ENCODE measurements at regions of chr3 and their contacts with region 1.

Region 1: GRCh38 chr3:51941798-51942602 is at the starts of genes PARP3 and RRP9:
- DNase-seq: peak; percentile 100
- ATAC-seq: peak; percentile 95
- H3K4me3 Mint-ChIP-seq: peak within 1 kb of the TSS; percentile 84
- H3K27ac Mint-ChIP-seq: peak within 1 kb of the TSS; percentile 83
- H3K4me1 Mint-ChIP-seq: peaks cover 33% of the 10 kb centered on the region
- H3K27me3 Mint-ChIP-seq: no peaks in the 10 kb centered on the region
- total RNA-seq, gene PARP3: 10.6 to 12.2 TPM
- total RNA-seq, gene RRP9: 38.2 to 39.3 TPM

Region 2: DNA sequence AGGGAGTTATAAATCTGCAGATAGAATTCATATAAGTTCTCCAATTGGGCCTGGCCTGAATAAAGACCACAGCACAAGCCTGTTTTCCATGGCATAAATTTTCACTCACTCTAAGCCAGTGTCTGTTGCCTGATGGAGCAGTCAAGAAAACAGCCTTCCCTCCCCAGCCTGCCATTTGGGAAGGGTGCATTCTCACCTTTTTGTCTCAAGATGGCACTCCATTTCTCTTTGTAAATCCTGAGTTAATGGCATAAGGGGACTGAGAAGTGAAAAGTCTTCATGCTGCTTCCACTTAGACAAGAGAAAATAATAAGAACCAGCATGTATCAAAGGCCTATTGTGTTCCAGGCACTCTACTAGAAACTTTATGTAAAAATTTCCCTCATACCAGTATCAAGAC is 672.5 kb before region 1 on chr3:
- CTCF ChIA-PET with region 1: no interaction called
- POLR2A ChIA-PET with region 1: no interaction called
- intact Hi-C with region 1: no loop called
- DNase-seq: no peak
- ATAC-seq: no peak
- H3K4me3 Mint-ChIP-seq: no peak overlapping the region
- H3K27ac Mint-ChIP-seq: no peak overlapping the region
- H3K4me1 Mint-ChIP-seq: peaks cover 29% of the 10 kb centered on the region
- H3K27me3 Mint-ChIP-seq: no peaks in the 10 kb centered on the region

Region 3: DNA sequence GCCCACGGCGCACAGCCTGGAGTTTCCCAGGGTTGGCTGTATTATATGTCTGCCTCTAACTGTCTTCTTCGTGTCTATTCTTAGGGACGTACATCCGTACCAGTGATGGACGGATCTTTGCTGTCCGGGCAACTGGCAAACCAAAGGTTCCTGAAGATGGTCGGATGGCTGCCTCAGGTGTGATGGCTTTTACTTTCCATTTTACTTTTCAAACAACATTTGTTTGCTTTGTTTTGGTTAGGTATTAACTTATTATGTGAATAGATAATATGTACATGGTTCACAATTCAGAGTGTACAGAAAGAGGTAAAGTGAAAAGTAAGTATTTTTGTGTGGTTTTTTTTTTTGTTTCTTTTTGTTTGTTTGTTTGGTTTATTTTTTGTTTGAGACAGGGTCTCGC is 282.1 kb before region 1 on chr3:
- CTCF ChIA-PET with region 1: no interaction called
- POLR2A ChIA-PET with region 1: no interaction called
- intact Hi-C with region 1: no loop called
- DNase-seq: no peak
- ATAC-seq: no peak
- H3K4me3 Mint-ChIP-seq: no peak overlapping the region
- H3K27ac Mint-ChIP-seq: no peak overlapping the region
- H3K4me1 Mint-ChIP-seq: no peaks in the 10 kb centered on the region
- H3K27me3 Mint-ChIP-seq: no peaks in the 10 kb centered on the region

Region 4: GRCh38 chr3:51670823-51671733 is 270.9 kb before region 1 on chr3 and contains the start of gene TEX264:
- CTCF ChIA-PET with region 1: no interaction called
- POLR2A ChIA-PET with region 1: no interaction called
- intact Hi-C with region 1: loop called in 1 of 2 experiments (anchors 1 kb)
- DNase-seq: peak; percentile 94
- ATAC-seq: peak; percentile 66
- H3K4me3 Mint-ChIP-seq: peak within 1 kb of the TSS; percentile 79
- H3K27ac Mint-ChIP-seq: peak within 1 kb of the TSS; percentile 74
- H3K4me1 Mint-ChIP-seq: peaks cover 56% of the 10 kb centered on the region
- H3K27me3 Mint-ChIP-seq: no peaks in the 10 kb centered on the region
- total RNA-seq, gene TEX264: 35.3 to 37.4 TPM

Region 5: DNA sequence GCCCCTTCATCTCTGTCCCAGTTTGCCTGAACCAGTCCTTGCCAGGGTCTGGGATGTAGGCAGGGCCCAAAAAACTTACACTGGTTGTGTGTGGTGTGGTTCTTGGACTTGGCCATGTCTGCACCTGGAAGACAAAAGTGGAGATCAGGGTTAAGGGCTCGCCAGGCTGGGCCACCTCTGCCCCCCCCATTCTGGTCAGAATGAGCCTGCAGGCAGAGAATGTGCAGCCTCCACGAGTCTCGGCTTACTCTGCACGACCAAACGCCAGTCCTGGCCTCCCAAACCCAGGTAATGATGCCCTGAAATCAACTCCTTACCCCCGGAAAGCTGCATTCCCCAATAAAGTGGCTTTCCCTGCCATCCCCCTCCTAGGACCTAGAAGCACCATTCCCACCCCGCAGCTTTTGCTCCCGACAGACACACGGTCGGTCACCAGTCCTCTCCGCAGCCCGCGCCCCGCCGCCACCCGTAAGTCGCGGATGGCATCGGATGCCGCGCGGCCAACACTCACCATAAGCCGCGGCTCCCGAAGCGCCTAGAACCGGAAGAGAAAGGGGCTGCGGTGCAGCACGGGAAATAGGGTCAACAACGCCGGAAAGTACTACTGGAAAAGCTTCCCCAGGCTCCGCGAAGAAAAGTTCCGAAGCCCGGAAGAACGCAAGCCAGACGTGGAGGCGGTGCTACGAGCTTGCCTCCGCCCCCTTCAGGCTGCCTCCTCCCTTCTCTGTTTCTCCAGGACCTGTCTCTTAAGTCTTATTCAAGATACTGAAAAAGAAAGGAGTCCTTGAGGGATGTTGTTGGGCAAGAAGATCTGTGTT is 53.6 kb after region 1 on chr3 and contains the start of gene RPL29:
- CTCF ChIA-PET with region 1: interaction called, 14 read pairs
- POLR2A ChIA-PET with region 1: interaction called, 10 read pairs
- intact Hi-C with region 1: loop called (anchors 1 kb)
- DNase-seq: peak; percentile 96
- ATAC-seq: peak; percentile 95
- H3K4me3 Mint-ChIP-seq: peak within 1 kb of the TSS; percentile 100
- H3K27ac Mint-ChIP-seq: peak within 1 kb of the TSS; percentile 100
- H3K4me1 Mint-ChIP-seq: peaks cover 26% of the 10 kb centered on the region
- H3K27me3 Mint-ChIP-seq: no peaks in the 10 kb centered on the region
- total RNA-seq, gene RPL29: 1,975 to 2,071 TPM

Region 6: DNA sequence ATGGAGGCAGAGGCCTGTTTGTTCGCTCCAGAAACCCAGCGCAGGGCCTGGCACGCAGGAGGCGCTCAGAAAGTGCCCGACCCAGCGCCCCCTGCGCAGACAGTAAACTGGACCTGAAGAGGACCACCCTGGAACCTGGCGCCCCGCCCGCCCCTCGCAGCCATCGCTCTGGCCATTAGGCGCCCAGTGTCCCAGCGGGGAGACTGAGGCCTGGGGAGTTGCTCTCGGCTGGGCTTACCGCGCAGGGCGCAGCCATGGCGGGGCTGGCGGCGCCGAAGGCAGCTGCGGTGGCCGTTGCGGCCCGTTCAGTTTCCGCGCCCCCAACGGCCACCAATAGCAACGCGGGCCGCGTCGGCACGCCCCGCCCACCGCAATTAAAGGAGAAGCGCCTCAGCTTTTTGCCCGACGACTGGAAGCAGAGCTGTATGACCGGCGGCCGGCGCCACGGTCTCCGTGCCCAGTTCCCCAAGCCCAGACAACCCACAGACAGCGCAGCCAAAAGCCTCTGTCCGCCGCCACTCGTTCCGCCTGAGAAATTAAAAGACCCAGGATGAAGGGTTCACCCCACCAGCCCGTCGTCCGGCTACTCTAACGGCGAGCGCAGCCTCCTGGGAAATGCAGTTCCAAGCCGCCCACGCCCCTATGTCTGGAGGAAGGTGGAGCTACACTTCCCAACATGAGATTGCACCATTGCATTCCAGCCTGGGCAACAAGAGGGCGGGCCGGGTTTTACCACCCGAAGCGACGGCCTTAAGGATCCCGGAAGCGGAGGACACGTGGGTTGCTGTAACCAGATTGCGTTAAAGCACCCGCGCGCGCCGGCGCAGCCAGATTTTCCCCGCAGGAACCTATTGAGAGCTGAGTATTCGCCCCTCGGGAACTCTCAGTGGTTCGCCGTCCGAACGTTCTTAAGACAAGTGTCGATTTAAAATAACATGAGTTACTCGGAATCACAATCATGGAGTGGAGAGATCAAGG is 212.4 kb after region 1 on chr3 and contains the start of gene POC1A:
- CTCF ChIA-PET with region 1: interaction called, 4 read pairs
- POLR2A ChIA-PET with region 1: interaction called, 13 read pairs
- intact Hi-C with region 1: loop called in 1 of 2 experiments (anchors 1 kb)
- DNase-seq: peak; percentile 95
- ATAC-seq: peak; percentile 89
- H3K4me3 Mint-ChIP-seq: peak within 1 kb of the TSS; percentile 80
- H3K27ac Mint-ChIP-seq: peak within 1 kb of the TSS; percentile 93
- H3K4me1 Mint-ChIP-seq: peaks cover 19% of the 10 kb centered on the region
- H3K27me3 Mint-ChIP-seq: no peaks in the 10 kb centered on the region
- total RNA-seq, gene POC1A: 23.4 to 26.1 TPM

Region 7: GRCh38 chr3:52171514-52172261 is 229.7 kb after region 1 on chr3:
- CTCF ChIA-PET with region 1: no interaction called
- POLR2A ChIA-PET with region 1: no interaction called
- intact Hi-C with region 1: no loop called
- DNase-seq: no peak
- ATAC-seq: peak; percentile 44
- H3K4me3 Mint-ChIP-seq: no peak overlapping the region
- H3K27ac Mint-ChIP-seq: no peak overlapping the region
- H3K4me1 Mint-ChIP-seq: no peaks in the 10 kb centered on the region
- H3K27me3 Mint-ChIP-seq: no peaks in the 10 kb centered on the region

Region 8: DNA sequence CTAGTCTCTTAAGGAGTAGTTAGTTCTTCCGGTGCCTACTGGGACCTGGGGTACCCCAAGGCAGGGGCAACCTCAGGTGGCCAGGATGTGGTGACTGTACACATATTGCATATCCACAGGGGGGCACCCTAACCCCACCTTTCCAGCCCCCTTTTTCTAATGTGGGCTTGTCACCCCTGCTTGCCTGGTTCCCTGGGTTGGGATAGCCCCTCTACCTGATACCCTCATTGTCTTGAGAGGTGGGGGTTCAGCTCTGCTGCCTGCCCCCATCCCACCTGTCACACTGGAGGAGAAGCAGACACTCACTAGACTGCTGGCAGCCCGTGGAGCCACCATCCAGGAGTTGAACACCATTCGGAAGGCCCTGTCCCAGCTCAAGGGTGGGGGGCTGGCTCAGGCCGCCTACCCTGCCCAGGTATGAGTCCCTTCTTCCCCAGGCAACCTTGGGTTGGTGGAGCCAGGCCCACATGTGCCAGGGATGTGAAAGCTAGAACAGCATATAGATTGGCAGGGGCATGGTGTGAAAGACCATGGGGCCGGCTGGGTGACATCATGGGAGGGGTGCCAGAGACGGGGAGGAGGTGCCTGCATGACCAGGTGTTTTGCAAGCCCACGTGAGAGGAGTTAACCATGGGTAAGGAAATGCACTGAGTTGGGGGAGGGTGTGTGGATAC is 349.6 kb after region 1 on chr3:
- CTCF ChIA-PET with region 1: no interaction called
- POLR2A ChIA-PET with region 1: no interaction called
- intact Hi-C with region 1: loop called in 1 of 2 experiments (anchors 1 kb)
- DNase-seq: peak; percentile 66
- ATAC-seq: no peak
- H3K4me3 Mint-ChIP-seq: no peak overlapping the region
- H3K27ac Mint-ChIP-seq: no peak overlapping the region
- H3K4me1 Mint-ChIP-seq: peaks cover 16% of the 10 kb centered on the region
- H3K27me3 Mint-ChIP-seq: no peaks in the 10 kb centered on the region